Heart right ventricle (tissue), 16 donors: ENCODE measurements at regions of chr10 and their contacts with region 1.

Region 1: GRCh38 chr10:14971867-14972448 is 12.8 kb downstream of the MEIG1 start:
- DNase-seq: no peak
- ATAC-seq: no peak
- H3K4me3 ChIP-seq: no peak overlapping the region
- H3K27ac ChIP-seq: no peak overlapping the region
- H3K4me1 ChIP-seq: no peaks in the 10 kb centered on the region
- H3K27me3 ChIP-seq: peaks cover 0 to 27% (median 14%) of the 10 kb centered on the region in 7 donors
- CTCF ChIP-seq: peak in 7 of 9 donors; percentile 50 to 70 (median 55)

Region 2: DNA sequence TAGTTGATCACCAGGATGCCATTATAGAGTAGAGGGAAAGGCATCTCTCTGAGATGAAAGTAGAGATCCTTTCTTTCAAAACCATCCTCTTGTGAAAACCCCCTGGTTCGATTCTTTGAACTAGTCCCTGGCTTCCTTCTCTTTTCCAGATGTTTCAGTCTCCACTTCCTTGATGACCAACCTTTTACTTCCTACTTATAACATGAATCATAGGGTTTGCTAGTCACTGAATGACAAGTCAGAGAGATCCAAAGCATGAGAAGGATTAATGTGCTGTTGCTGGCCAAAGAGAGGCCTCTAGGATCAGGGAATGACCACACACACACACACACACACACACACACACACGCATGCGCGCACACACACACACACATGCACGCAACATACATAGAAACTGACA is 480.2 kb before region 1 on chr10:
- intact Hi-C with region 1: loop called in 1 of 10 experiments (anchors 10 kb)
- DNase-seq: no peak
- ATAC-seq: no peak
- H3K4me3 ChIP-seq: no peak overlapping the region
- H3K27ac ChIP-seq: no peak overlapping the region
- H3K4me1 ChIP-seq: no peaks in the 10 kb centered on the region
- H3K27me3 ChIP-seq: peaks cover 0 to 25% (median 6%) of the 10 kb centered on the region in 7 donors
- CTCF ChIP-seq: no peak

Region 3: DNA sequence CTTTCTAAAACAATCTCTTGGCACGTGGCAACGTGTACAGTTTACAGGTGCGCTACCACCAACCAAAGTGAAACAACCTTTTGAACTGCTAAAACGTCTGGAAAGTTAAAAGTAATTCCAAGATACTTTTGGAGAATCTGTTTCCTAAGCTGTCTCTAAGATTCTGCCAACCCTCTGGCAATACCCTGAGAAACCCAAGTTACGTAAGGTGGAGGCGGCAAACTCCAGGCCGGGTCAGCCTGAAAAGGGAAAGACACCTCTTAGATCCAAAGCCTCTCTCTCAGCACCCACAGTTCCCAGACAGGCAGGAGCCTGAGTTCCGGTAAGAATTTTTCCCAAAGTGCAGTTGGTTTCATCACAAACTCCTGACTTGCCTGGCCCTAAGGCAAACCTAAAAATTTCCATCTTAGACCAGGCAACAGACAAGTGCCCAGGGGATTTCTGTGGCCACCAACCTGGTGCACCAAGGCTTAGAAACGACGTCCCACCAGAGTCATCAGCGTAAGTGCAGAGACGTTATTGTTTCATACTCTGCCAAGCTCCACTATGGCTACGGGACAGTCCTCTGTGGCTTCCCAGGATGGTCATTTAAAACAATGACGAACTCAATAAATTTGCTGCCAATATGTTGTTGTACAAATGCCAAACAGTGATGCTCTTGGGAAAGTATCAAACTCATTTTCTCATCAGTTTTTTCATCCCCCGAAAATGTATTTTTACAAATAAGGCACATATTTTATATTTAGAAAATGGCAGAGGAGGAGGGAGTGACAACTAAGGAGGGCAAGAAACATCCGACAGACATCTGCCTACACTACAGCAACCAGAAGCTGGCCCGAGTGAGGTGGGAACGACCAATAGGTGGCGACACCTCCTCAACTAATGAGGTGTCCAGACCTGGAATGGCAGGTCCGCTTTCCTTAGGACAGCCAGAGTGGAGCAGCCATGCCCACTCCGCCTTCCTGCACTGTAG is 435.4 kb before region 1 on chr10:
- intact Hi-C with region 1: loop called in 1 of 10 experiments (anchors 10 kb)
- DNase-seq: peak; percentile 69 to 82
- ATAC-seq: peak; percentile 72 to 91 (median 88)
- H3K4me3 ChIP-seq: no peak overlapping the region
- H3K27ac ChIP-seq: peak overlapping the region in 2 of 10 donors; percentile 41 to 50
- H3K4me1 ChIP-seq: peaks cover 0 to 21% (median 7%) of the 10 kb centered on the region in 9 donors
- H3K27me3 ChIP-seq: no peaks in the 10 kb centered on the region
- CTCF ChIP-seq: peak; percentile 31 to 78 (median 70)